Activated T-helper 1 cell treated with anti-CD3 and anti-CD28 coated beads, Interleukin-12 subunit alpha, Interleukin-12 subunit beta, Interleukin-2, Interleukin-4 antibody, amounts not matched to agents 30 ng/mL and 10 ng/mL and 1 ng/mL, durations not matched to agents 14 hours and 24 hours and 36 hours (primary cell): ENCODE measurements at regions of chr17 and their contacts with region 1.

Region 1: DNA sequence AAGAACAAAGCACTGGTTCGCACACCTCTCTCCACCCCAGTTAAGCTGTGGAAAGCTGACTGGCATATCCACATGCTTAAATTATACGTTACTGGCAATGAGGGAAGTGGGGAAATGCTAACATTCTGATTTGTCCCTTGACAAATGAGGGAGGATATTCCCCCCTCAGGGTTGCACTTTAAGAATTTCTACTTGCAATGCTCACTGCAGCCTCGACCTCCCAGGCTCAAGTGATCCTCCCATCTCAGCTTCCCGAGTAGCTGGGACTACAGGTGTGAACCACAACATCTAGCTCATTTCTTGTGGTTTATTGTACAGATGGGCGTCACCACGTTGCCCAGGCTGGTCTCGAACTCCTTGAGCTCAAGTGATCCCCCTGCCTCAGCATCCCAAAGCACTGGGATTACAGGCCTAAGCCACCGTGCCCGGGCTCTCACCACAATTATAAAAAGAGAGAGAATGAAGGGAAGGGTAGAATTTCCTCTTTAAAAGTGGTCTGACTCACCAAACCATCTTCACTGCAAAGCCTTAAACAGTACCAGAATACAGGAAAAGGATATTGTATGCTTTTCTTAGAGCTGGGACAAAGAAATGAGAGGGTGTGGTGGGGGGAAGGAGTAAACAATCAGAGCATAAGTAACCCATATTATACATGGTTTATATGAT is 38.9 kb downstream of the KANSL1 start:
- DNase-seq: peak; percentile 27
- H3K4me3 Mint-ChIP-seq: peak overlapping the region; percentile 76
- H3K27ac Mint-ChIP-seq: peak overlapping the region; percentile 82
- H3K4me1 Mint-ChIP-seq: peaks cover 82% of the 10 kb centered on the region
- H3K27me3 Mint-ChIP-seq: no peaks in the 10 kb centered on the region

Region 2: GRCh38 chr17:46100590-46100989 is 53.7 kb before region 1 on chr17:
- intact Hi-C with region 1: loop called (anchors 2 kb)
- DNase-seq: no peak
- H3K4me3 Mint-ChIP-seq: no peak overlapping the region
- H3K27ac Mint-ChIP-seq: peak overlapping the region; percentile 77
- H3K4me1 Mint-ChIP-seq: peaks cover 54% of the 10 kb centered on the region
- H3K27me3 Mint-ChIP-seq: no peaks in the 10 kb centered on the region

Region 3: DNA sequence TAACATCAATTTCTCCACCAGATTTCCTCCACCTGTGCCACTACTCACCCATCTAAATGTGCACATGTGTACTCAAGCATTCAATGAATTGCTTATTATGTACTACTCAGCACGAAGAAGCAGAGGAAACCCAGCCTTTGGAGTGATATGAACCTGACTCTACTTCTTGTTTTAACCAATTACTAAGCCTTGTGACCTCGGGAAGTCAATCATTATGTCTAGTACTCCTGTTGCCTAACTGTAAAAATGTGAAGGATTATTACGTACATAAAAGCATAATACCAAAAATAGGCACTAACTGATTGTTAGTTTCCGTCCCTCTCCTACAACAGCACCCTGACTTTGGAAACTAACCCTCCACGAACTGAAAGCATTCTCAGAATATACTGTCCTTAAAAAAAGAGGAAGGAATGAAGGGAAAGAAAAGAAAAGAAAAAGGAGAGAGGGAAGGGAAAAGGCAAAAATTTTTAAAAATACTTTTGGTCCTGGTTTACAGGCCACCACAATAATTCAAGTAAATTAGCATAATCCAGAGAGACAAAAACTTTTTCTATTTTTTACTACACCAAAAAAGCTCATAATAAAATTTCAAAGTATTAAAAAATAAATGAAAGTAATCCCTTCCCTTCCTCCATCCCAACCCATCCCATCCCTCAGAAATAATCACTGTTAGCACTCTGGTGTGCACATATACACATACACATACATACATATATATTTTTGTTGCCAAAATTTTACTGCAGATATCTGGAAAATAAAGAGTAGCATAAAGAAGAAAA is 14.7 kb before region 1 on chr17:
- intact Hi-C with region 1: loop called (anchors 2 kb)
- DNase-seq: no peak
- H3K4me3 Mint-ChIP-seq: no peak overlapping the region
- H3K27ac Mint-ChIP-seq: no peak overlapping the region
- H3K4me1 Mint-ChIP-seq: peaks cover 91% of the 10 kb centered on the region
- H3K27me3 Mint-ChIP-seq: no peaks in the 10 kb centered on the region